Heart left ventricle (tissue), 16 donors: ENCODE measurements at regions of chr6 and their contacts with region 1.

Region 1: DNA sequence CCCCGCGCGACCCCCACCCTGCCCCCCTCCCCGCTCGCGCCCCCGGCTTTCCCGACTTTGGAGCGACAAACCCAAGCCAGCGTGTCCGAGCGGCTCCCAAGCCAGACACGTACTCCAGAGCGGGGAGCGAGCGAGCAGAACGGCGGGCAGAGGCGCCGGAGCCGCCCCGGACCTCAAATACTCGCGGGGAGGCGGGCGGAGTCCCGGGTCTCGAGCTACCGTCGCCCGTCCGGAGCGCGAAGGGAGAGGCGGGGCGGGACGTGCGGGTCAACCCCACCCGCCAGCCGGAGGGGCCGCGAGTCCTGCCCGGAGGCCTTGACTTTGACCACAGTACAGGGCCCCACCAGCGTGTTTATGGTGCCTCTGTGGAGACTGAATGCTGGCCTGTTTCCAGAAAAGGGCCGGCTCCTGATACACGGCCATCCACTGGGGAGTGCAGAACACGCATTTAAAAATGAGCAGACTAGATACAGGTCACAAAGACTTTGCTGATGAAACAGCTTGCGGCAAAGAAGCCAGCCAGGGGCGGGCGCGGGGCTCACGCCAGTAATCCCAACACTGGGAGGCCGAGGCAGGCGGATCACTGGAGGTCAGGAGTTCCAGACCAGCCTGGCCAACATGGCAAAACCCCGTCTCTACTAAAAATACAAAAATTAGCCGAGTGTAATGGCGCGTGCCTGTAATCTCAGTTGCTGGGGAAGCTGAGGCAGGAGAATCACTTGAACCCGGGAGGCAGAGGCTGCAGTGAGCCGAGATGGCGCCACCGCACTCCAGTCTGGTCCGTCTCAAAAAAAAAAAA is at the start of gene SERPINB6:
- DNase-seq: peak; percentile 87 to 92 (median 89)
- ATAC-seq: peak; percentile 91 to 94 (median 92)
- H3K4me3 ChIP-seq: peak within 1 kb of the TSS; percentile 64 to 88 (median 74)
- H3K27ac ChIP-seq: peak within 1 kb of the TSS; percentile 85 to 100 (median 96)
- H3K4me1 ChIP-seq: peaks cover 0 to 30% (median 23%) of the 10 kb centered on the region in 12 donors
- H3K27me3 ChIP-seq: no peaks in the 10 kb centered on the region
- CTCF ChIP-seq: no peak
- POLR2A ChIP-seq: peak in 1 of 2 donors; percentile 29
- total RNA-seq, gene SERPINB6: 168 to 246 (median 188) TPM

Region 2: GRCh38 chr6:2524090-2524489 is 447.5 kb before region 1 on chr6:
- intact Hi-C with region 1: no loop called
- DNase-seq: no peak
- ATAC-seq: no peak
- H3K4me3 ChIP-seq: no peak overlapping the region
- H3K27ac ChIP-seq: no peak overlapping the region
- H3K4me1 ChIP-seq: peaks cover 0 to 9% (median 0%) of the 10 kb centered on the region in 12 donors
- H3K27me3 ChIP-seq: peaks cover 0 to 8% (median 0%) of the 10 kb centered on the region in 9 donors
- CTCF ChIP-seq: peak in 1 of 12 donors; percentile 5
- POLR2A ChIP-seq: no peak

Region 3: GRCh38 chr6:2952557-2953095 is 19.0 kb before region 1 on chr6:
- intact Hi-C with region 1: loop called in 1 of 10 experiments (anchors 2 kb)
- DNase-seq: peak; percentile 72 to 87 (median 82)
- ATAC-seq: peak; percentile 26 to 78 (median 74)
- H3K4me3 ChIP-seq: peak overlapping the region in 3 of 12 donors; percentile 10 to 19 (median 11)
- H3K27ac ChIP-seq: peak overlapping the region in 11 of 12 donors; percentile 29 to 77 (median 57)
- H3K4me1 ChIP-seq: peaks cover 0 to 44% (median 22%) of the 10 kb centered on the region in 12 donors
- H3K27me3 ChIP-seq: no peaks in the 10 kb centered on the region
- CTCF ChIP-seq: peak; percentile 85 to 99 (median 96)
- POLR2A ChIP-seq: peak in 1 of 2 donors; percentile 27